ENCODE measurements at regions of chr20 and their contacts with region 1.

Region 1: GRCh38 chr20:38246357-38247165 is 14.0 kb downstream of the KIAA1755 start:
- DNase-seq: no peak
- H3K4me3 ChIP-seq: no peak overlapping the region
- H3K27ac ChIP-seq: peak overlapping the region; percentile 63 to 65
- H3K4me1 ChIP-seq: peaks cover 0 to 12% of the 10 kb centered on the region in 2 donors
- H3K27me3 ChIP-seq: no peaks in the 10 kb centered on the region
- CTCF ChIP-seq: no peak

Region 2: DNA sequence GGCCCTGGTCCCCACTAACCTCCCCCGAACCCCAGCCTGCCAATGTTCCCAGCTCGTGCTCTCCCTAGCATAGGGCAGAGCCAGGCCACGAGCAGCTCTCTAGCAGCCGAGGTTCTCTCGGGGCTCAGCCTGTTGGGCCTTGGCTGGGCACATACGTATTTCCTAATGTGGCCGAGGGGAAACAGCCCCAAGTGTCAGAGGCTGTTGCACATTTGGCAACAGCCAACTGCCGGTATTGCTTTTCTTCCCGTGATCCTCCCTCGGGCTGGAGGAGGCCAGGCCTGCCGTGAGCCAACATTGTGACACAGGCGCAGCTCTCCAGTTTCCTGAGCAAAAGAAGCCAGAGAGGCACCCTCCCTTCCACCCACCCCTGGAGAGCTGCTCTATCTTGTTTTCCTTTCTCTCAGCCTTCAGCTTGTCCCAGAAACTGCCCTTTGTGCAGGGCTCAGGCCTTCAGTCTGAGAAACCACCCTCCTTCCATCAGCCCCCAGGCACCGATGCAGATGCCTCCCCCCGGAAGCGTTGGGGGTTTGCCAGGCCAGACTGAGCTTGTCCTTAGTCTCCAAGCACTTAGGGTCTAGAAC is 52.2 kb after region 1 on chr20:
- intact Hi-C with region 1: loop called (anchors 5 kb)
- DNase-seq: peak; percentile 60 to 93
- H3K4me3 ChIP-seq: peak overlapping the region in 1 of 2 donors; percentile 29
- H3K27ac ChIP-seq: peak overlapping the region; percentile 84 to 88
- H3K4me1 ChIP-seq: peaks cover 5 to 10% of the 10 kb centered on the region in 2 donors
- H3K27me3 ChIP-seq: no peaks in the 10 kb centered on the region
- CTCF ChIP-seq: no peak

Region 3: GRCh38 chr20:38434743-38435554 is 188.4 kb after region 1 on chr20 and contains the start of gene SNHG17:
- intact Hi-C with region 1: no loop called
- DNase-seq: peak; percentile 41 to 95
- H3K4me3 ChIP-seq: peak within 1 kb of the TSS; percentile 61 to 74
- H3K27ac ChIP-seq: peak within 1 kb of the TSS; percentile 72 to 87
- H3K4me1 ChIP-seq: no peaks in the 10 kb centered on the region
- H3K27me3 ChIP-seq: no peaks in the 10 kb centered on the region
- CTCF ChIP-seq: peak; percentile 99 to 100 (median 100)
- total RNA-seq, gene SNHG17: 129 TPM